GM10248 (cell line): ENCODE measurements at regions of chr9 and their contacts with region 1.

Region 1: GRCh38 chr9:109903515-109904138 is 123.6 kb downstream of the PALM2AKAP2 start:
- DNase-seq: peak; percentile 64
- CTCF ChIP-seq: peak; percentile 73

Region 2: GRCh38 chr9:109705515-109705914 is 198.1 kb before region 1 on chr9:
- CTCF ChIA-PET with region 1: no interaction called
- POLR2A ChIA-PET with region 1: no interaction called
- DNase-seq: no peak
- CTCF ChIP-seq: no peak

Region 3: GRCh38 chr9:109843641-109844040 is 60.0 kb before region 1 on chr9:
- CTCF ChIA-PET with region 1: no interaction called
- POLR2A ChIA-PET with region 1: no interaction called
- DNase-seq: no peak
- CTCF ChIP-seq: no peak

Region 4: DNA sequence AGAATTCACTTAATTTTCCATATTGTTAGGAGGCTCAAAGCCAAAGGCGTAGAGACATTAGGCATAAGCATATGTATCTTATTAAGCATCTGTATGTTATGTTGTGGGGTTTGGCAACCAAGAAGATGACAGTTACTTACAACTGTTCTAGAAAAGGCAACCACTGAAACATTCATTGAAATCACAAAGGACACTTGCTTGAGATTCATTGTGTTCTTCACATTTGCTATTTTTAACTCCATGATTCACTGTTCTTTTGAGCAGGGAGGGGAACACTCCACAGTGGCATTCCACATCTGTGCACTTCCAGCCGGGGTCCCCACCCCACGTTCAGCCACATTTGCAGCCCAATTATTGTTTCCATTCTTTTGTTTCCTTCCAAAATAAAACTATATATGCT is 16.5 kb before region 1 on chr9:
- CTCF ChIA-PET with region 1: interaction called, 35 read pairs
- POLR2A ChIA-PET with region 1: no interaction called
- DNase-seq: no peak
- CTCF ChIP-seq: no peak

Region 5: DNA sequence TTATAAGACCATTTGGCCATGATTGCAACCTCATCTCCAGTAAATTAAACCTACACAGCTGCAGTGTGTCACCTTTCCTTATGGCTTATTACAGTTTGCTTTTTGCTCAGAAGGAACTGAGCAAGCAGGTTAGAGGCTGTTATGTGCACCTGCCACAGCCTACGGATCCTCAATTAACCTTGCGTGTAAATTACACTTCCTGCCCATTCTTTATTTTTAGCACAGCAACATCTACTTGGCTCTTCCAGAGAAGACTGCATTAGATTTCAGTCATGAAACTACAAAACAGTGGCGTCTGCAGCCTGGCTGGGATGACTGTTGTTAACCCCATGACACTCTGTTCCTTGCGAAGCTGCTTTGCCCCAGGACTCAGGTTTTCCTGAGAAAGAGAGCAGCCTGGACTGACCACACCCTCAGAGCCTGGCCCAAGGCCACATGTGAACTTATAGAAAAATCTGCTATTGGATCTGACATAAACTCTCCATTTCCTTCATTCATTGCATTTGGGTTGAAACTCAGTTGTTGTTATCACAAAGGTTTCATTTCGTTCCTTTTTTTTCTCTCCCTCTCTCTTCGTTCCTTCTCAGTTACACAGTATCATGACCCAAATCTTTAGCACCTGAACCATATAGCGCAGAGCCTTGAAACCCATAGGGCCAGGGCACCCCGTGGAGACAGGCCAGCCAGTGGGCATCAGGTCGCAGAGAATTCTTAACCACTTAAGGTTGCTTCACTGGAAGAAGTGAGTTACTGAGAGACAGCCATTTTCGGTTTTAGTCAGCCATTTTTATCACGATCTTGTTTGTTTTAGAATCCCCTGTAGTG is 14.9 kb after region 1 on chr9:
- CTCF ChIA-PET with region 1: interaction called, 92 read pairs
- POLR2A ChIA-PET with region 1: no interaction called
- DNase-seq: peak; percentile 38
- CTCF ChIP-seq: no peak

Region 6: DNA sequence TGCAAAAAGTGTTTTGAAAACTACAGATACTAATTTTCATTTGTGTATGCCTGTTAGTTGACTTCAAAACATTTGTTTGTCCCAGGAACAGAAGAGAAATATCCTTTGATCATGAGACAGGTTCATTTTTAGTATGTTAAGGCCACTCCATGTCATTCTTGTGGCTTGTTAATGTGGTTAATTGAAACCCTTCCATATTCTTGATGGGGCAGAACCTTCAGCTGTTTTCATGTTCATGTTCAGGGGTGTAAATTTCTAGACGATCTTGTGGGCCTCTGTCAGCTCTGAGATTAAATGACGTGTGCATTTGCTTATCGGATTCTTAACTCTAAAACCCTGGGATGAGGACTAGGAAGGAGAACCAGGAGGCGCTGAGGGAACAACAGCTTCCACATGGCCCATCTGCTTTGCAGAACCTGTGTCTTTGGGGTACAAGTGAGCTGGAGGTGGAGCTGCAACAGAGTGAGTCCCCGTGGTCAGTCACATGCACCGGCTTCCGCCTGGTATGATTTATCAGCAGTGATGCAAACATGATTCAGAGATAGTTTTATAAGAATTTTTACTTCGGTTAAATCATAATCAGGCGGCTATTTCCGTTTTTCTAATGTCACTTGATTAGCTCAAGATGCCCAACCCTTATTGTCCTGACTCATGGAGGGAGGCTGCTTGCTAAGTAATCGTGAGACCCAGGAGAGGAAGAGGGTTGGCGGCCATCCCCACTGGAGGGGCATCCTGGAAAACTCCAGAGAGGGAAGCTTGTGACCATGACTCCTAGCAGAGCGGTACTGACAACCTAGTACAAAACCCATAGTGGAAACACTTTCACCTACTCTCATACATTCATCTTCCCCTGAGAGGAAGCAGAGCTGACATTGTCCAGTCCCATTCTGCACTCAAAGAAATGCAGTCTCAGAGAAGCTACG is 166.0 kb after region 1 on chr9:
- CTCF ChIA-PET with region 1: interaction called, 10 read pairs
- POLR2A ChIA-PET with region 1: no interaction called
- DNase-seq: no peak
- CTCF ChIP-seq: no peak

Region 7: GRCh38 chr9:110125207-110125751 is 221.7 kb after region 1 on chr9:
- CTCF ChIA-PET with region 1: interaction called, 13 read pairs
- POLR2A ChIA-PET with region 1: no interaction called
- DNase-seq: no peak
- CTCF ChIP-seq: no peak

Region 8: GRCh38 chr9:110152704-110153374 is 249.2 kb after region 1 on chr9:
- CTCF ChIA-PET with region 1: interaction called, 82 read pairs
- POLR2A ChIA-PET with region 1: interaction called, 4 read pairs
- DNase-seq: no peak
- CTCF ChIP-seq: peak; percentile 71